Activated CD4-positive, alpha-beta T cell treated with anti-CD3 and anti-CD28 coated beads for 36 hours (primary cell): ENCODE measurements at regions of chr2 and their contacts with region 1.

Region 1: DNA sequence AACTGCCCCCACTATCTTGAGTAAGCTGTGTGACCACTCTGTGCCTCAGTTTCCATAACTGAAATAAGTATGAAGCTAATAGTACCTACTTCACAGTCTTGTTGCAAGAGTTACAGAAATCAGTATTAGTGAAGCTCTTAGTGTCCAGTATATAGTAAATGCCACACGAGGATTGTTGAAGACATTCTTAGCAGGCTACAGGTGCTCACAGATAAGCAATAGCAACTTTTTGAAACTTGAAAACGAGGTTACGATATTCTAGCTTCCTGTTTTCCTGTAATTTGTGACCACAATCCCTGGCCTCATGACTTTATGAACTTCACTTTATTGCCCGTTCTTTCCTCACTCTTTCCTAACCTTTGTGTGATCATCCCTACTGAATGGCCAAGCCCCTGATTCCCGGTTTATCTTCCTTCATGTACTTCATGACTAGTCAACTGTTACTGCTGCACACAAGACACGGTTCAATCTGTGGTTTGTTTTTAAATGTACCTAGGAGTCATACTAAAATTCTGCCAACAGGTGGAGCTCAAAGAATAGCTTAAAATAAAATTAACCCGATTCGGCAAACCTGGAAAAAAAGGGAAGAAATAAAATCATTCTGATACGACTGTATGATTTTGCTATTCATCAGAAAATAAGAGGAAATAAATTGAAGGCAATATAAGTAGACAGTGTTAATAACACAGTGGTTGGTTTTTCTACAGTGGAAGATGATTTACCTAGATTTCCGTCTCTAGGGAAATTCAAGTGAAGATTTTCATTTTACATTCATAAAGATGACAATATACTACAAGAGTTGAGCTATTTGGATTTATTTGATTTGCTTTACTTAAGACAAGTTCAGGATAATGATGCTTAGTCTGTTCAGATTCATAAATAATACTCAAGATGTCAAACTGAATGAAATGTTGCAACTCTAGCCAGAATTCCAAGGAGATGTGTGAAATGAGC is 38.1 kb upstream of the STAT1 start:
- DNase-seq: peak; percentile 26
- ATAC-seq: peak; percentile 71
- H3K4me3 Mint-ChIP-seq: no peak overlapping the region
- H3K27ac Mint-ChIP-seq: no peak overlapping the region
- H3K4me1 Mint-ChIP-seq: peaks cover 15% of the 10 kb centered on the region
- H3K27me3 Mint-ChIP-seq: no peaks in the 10 kb centered on the region

Region 2: DNA sequence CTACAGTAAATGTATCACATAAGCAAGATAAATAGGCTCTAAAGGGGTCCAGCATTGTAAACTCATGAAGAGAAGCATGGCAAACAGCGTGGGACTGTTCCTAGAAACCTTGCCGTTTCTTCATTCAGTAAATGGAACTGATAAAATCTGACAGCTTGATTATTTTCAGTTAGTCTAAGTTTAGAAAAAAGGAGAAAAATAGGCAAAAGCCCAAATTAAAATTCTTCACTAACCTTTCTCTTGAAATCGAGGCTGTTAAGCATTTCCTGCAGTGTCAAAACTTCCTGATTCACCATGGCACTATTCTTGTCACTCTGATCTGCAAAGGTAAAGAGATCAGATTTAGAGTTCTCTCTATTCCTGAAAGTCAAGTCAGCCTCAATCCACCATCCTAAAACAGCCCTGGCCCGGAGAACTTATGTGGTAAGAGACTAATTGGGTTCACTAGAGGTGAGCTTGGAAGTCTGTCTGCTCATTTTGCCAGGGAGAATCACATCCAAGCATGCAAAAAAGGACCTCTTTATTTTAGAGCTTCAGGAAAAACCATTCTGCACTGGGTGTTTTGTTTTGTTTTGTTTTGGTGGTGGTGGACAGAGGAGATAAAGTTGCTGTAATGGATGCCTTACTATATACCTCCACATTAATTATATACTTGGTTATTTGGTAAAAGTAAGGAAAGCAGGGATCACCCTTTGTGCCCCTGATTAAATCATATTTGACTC is 14.3 kb after region 1 on chr2:
- CTCF ChIA-PET with region 1: interaction called, 90 read pairs
- POLR2A ChIA-PET with region 1: no interaction called
- intact Hi-C with region 1: no loop called
- DNase-seq: no peak
- ATAC-seq: peak; percentile 53
- H3K4me3 Mint-ChIP-seq: peak overlapping the region; percentile 47
- H3K27ac Mint-ChIP-seq: peak overlapping the region; percentile 66
- H3K4me1 Mint-ChIP-seq: peaks cover 72% of the 10 kb centered on the region
- H3K27me3 Mint-ChIP-seq: no peaks in the 10 kb centered on the region

Region 3: DNA sequence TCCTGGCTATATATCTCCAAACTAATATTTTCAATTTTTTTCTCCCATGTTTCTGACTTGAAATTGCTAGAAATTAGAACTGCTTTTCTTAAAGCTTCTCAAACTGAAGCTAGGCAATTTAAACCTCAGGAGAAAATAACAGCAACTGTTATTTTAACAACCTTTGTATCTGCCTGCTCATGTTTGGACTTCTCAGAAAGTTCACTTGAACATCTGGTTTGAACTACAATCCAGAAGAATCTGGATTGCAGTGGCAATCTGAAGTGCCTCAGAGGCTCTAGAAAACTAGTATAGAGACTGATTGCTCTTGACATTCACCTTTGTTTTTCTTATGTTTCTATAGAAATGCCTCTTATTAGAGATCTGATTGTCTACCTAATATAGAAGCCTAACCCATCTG is 34.6 kb after region 1 on chr2:
- CTCF ChIA-PET with region 1: interaction called, 10 read pairs
- POLR2A ChIA-PET with region 1: no interaction called
- intact Hi-C with region 1: no loop called
- DNase-seq: no peak
- ATAC-seq: no peak
- H3K4me3 Mint-ChIP-seq: no peak overlapping the region
- H3K27ac Mint-ChIP-seq: no peak overlapping the region
- H3K4me1 Mint-ChIP-seq: peaks cover 15% of the 10 kb centered on the region
- H3K27me3 Mint-ChIP-seq: no peaks in the 10 kb centered on the region

Region 4: GRCh38 chr2:191171708-191172355 is 119.7 kb after region 1 on chr2:
- CTCF ChIA-PET with region 1: interaction called, 51 read pairs
- POLR2A ChIA-PET with region 1: no interaction called
- intact Hi-C with region 1: no loop called
- DNase-seq: peak; percentile 48
- ATAC-seq: peak; percentile 56
- H3K4me3 Mint-ChIP-seq: no peak overlapping the region
- H3K27ac Mint-ChIP-seq: peak overlapping the region; percentile 60
- H3K4me1 Mint-ChIP-seq: peaks cover 78% of the 10 kb centered on the region
- H3K27me3 Mint-ChIP-seq: no peaks in the 10 kb centered on the region

Region 5: GRCh38 chr2:191318729-191319078 is 266.6 kb after region 1 on chr2:
- CTCF ChIA-PET with region 1: no interaction called
- POLR2A ChIA-PET with region 1: no interaction called
- intact Hi-C with region 1: loop called in 1 of 2 experiments (anchors 10 kb)
- DNase-seq: no peak
- ATAC-seq: no peak
- H3K4me3 Mint-ChIP-seq: no peak overlapping the region
- H3K27ac Mint-ChIP-seq: no peak overlapping the region
- H3K4me1 Mint-ChIP-seq: peaks cover 13% of the 10 kb centered on the region
- H3K27me3 Mint-ChIP-seq: no peaks in the 10 kb centered on the region

Region 6: GRCh38 chr2:191521608-191522208 is 469.6 kb after region 1 on chr2:
- CTCF ChIA-PET with region 1: interaction called, 18 read pairs
- POLR2A ChIA-PET with region 1: no interaction called
- intact Hi-C with region 1: loop called (anchors 1 to 2 kb)
- DNase-seq: no peak
- ATAC-seq: no peak
- H3K4me3 Mint-ChIP-seq: no peak overlapping the region
- H3K27ac Mint-ChIP-seq: no peak overlapping the region
- H3K4me1 Mint-ChIP-seq: no peaks in the 10 kb centered on the region
- H3K27me3 Mint-ChIP-seq: peaks cover 6% of the 10 kb centered on the region